ENCODE measurements at regions of chr4 and their contacts with region 1.

Region 1: DNA sequence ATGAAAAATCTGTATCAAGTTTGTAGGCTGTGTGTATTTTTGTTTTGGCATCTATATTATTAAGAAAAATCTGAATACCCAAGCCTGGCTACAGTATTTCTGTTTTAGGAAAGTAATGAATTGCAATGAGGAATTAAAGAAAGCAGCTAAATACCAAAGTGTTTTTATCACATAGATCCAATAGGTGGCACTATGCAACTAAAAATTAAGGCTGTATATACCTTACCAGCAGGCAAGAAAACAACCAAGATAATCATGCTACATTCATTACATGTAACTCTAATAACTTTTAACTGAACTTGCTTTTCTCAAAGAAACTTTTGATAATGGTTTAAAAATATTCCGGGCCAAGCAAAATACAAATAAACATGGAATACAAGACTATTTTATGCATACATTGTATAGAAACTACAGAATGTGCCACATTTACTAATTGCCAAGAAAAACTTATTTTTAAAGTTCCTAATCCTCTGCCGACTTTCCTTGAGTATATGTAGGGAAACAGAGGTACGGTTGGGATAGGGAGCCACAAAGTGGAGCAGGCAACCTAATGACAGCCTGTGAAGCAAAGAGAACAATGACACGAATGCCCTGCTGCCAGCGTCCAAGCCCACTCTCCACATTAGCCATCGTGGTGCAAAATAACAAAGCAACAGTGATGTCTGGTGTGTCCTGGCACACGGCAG is 63.7 kb downstream of the SEC24D start:
- DNase-seq: no peak
- H3K4me3 Mint-ChIP-seq: no peak overlapping the region
- H3K27ac Mint-ChIP-seq: no peak overlapping the region
- H3K4me1 Mint-ChIP-seq: no peaks in the 10 kb centered on the region
- H3K27me3 Mint-ChIP-seq: no peaks in the 10 kb centered on the region

Region 2: GRCh38 chr4:118865091-118865708 is 93.0 kb after region 1 on chr4:
- CTCF ChIA-PET with region 1: interaction called, 30 read pairs
- intact Hi-C with region 1: loop called (anchors 1 kb)
- DNase-seq: peak; percentile 29
- H3K4me3 Mint-ChIP-seq: no peak overlapping the region
- H3K27ac Mint-ChIP-seq: no peak overlapping the region
- H3K4me1 Mint-ChIP-seq: no peaks in the 10 kb centered on the region
- H3K27me3 Mint-ChIP-seq: no peaks in the 10 kb centered on the region

Region 3: GRCh38 chr4:118888666-118889311 is 116.6 kb after region 1 on chr4 and contains the start of gene SYNPO2:
- CTCF ChIA-PET with region 1: interaction called, 57 read pairs
- intact Hi-C with region 1: loop called (anchors 1 kb)
- DNase-seq: peak; percentile 43
- H3K4me3 Mint-ChIP-seq: peak within 1 kb of the TSS; percentile 70
- H3K27ac Mint-ChIP-seq: no peak within 1 kb of the TSS
- H3K4me1 Mint-ChIP-seq: peaks cover 14% of the 10 kb centered on the region
- H3K27me3 Mint-ChIP-seq: peaks cover 30% of the 10 kb centered on the region
- total RNA-seq, gene SYNPO2: 0.14 TPM in 1 of 2 experiments, not detected in the other

Region 4: GRCh38 chr4:118968005-118968404 is 195.8 kb after region 1 on chr4:
- CTCF ChIA-PET with region 1: interaction called, 5 read pairs
- intact Hi-C with region 1: loop called (anchors 1 kb)
- DNase-seq: no peak
- H3K4me3 Mint-ChIP-seq: no peak overlapping the region
- H3K27ac Mint-ChIP-seq: no peak overlapping the region
- H3K4me1 Mint-ChIP-seq: peaks cover 7% of the 10 kb centered on the region
- H3K27me3 Mint-ChIP-seq: no peaks in the 10 kb centered on the region

Region 5: DNA sequence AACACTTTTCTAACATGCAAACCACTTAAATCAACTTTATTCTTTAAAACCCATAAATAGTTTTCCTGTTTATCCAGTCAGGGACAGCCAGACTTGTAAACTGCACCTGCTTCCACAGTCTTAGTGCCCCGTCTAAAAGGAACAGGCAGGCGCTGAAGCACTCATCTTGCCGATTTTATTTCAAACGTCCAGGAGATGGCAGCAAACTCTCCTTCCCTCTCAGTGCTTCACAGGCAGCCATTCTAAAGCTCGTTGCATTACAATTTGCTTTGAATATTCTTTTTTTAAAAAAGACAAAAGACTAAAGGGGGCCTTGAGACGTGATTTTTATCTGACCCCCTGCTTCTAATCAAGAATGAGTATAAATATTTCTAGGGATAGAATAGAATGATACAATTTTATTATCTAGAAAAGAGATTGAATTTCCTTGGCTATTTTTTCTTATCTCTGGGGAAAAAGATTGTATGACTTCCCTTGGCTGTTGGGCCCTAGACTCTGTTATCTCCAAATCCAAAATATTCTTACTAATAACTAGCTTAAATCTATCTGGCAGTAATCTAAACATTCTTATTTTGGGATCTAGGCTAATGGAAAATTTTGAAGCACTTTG is 269.8 kb after region 1 on chr4:
- CTCF ChIA-PET with region 1: no interaction called
- intact Hi-C with region 1: loop called (anchors 5 kb)
- DNase-seq: peak; percentile 75
- H3K4me3 Mint-ChIP-seq: no peak overlapping the region
- H3K27ac Mint-ChIP-seq: no peak overlapping the region
- H3K4me1 Mint-ChIP-seq: peaks cover 13% of the 10 kb centered on the region
- H3K27me3 Mint-ChIP-seq: no peaks in the 10 kb centered on the region

Region 6: GRCh38 chr4:119300101-119300978 is 528.1 kb after region 1 on chr4:
- CTCF ChIA-PET with region 1: no interaction called
- intact Hi-C with region 1: loop called (anchors 10 kb)
- DNase-seq: peak; percentile 92
- H3K4me3 Mint-ChIP-seq: peak overlapping the region; percentile 97
- H3K27ac Mint-ChIP-seq: peak overlapping the region; percentile 95
- H3K4me1 Mint-ChIP-seq: peaks cover 25% of the 10 kb centered on the region
- H3K27me3 Mint-ChIP-seq: no peaks in the 10 kb centered on the region